Head of caudate nucleus (tissue), 42 donors: ENCODE measurements at regions of chr19 and their contacts with region 1.

Region 1: GRCh38 chr19:39187559-39187957 is 9.2 kb upstream of the NCCRP1 start:
- DNase-seq: no peak

Region 2: DNA sequence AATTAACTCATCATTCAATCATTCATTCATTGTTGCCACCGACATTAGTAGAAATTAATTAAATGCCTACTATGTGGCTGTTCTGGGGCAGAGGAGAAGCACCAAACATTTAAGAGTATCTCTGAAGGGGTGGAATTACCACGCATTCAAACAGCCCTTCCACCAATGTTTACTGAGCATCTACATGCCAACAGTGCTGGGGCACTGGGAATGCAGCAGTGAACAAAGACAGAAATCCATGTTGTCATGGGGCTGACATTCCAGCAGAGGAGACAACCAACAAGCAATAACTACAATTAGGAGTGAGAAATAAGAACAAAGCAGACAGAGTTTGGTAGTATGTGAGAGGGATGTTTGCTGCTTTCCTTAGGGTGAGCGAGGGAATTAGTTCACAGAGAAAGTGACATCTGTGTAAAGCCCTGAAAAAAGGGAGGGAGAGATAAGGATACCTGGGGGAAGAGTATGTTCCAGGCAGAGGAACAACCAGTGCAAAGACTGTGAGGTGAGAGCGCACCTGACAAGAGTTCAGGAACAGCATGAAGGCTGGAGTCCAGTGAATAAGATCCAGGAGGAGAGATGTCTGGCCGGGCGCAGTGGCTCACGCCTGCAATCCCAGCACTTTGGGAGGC is 63.3 kb before region 1 on chr19:
- intact Hi-C with region 1: loop called (anchors 5 kb)
- DNase-seq: no peak